A549 (cell line): ENCODE measurements at regions of chr10 and their contacts with region 1.

Region 1: DNA sequence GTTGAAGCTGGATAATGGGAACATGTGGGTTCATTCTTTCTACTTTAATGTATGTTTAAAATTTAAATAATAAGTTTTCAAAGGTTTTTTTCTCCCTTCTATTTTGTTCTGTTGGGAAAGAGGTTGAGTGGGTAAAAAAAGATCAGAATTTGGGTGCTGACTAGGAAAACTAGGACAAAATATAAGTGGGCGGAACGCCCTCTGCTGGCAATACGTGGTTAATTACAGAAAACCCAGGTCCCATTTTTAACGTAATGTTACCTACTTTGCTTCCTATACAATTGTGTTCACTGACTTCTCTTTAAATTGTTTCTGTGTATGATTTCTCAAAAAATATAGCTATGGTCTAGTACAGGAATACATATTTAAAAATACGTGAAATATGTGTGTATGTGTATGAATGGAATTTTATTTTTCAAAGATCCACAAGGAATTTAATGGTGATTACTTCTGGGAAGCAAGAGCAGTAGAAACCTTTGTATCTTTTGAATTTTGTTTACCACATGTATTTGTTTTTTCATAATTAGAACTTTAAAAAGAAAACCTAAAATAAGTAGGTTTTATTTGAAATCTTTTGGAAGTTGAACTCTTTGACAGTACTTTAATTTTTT is 8.7 kb downstream of the ECD start:
- DNase-seq: peak; percentile 34 to 49
- ATAC-seq: peak; percentile 24 to 64; a peak in 3 of 6 replicates
- H3K4me3 ChIP-seq: no peak overlapping the region
- H3K27ac ChIP-seq: no peak overlapping the region
- H3K4me1 ChIP-seq: no peaks in the 10 kb centered on the region
- CTCF ChIP-seq: peak; percentile 95
- EP300 ChIP-seq: no peak
- POLR2A ChIP-seq: no peak
- RAD21 ChIP-seq: peak; percentile 64 to 79

Region 2: GRCh38 chr10:73096449-73097304 is 62.5 kb before region 1 on chr10 and contains the start of gene P4HA1:
- CTCF ChIA-PET with region 1: interaction called, 49 read pairs
- POLR2A ChIA-PET with region 1: interaction called, 4 read pairs
- DNase-seq: peak; percentile 94 to 98
- ATAC-seq: peak; percentile 90 to 96
- H3K4me3 ChIP-seq: peak within 1 kb of the TSS; percentile 75
- H3K27ac ChIP-seq: peak within 1 kb of the TSS; percentile 90 to 94
- H3K4me1 ChIP-seq: peaks cover 18% of the 10 kb centered on the region
- CTCF ChIP-seq: peak; percentile 74
- EP300 ChIP-seq: 0 out of 5 replicates have a peak, but pooled peaks of 1 of the 2 experiments have one; percentile 12
- POLR2A ChIP-seq: peak; percentile 99
- RAD21 ChIP-seq: peak; percentile 67 to 81
- polyA plus RNA-seq, gene P4HA1: 46.1 and 49.0 TPM in 2 replicates

Region 3: DNA sequence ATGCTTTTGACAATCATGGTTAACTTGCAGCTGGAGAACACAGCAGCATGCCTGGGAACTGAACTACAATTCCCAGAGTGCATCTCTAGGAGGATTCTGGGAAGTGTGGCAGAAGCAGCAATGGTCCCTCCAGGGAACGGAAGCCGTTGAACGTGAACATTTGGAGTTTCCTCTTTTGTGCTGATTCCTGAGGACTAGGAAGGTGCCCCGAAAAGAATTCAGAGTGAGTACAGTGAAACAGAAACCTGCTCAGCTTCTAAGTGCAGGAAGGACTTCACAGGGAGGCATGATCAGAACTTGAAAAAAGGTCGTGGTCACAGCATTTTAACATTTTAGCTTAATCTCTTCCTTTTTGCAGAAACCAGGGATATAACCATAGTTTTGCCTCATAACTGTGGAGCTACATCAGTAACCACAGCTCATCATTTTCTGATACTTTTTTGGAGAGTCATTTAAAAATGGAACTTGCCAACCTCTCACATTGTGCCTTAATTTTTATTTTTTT is 48.7 kb before region 1 on chr10 and contains the start of gene NUDT13:
- CTCF ChIA-PET with region 1: interaction called, 13 read pairs
- POLR2A ChIA-PET with region 1: no interaction called
- DNase-seq: peak; percentile 77 to 84
- ATAC-seq: peak; percentile 98 to 100
- H3K4me3 ChIP-seq: peak within 1 kb of the TSS; percentile 65
- H3K27ac ChIP-seq: peak within 1 kb of the TSS; percentile 87 to 89
- H3K4me1 ChIP-seq: peaks cover 18% of the 10 kb centered on the region; the same call in 2 of the 3 replicates
- CTCF ChIP-seq: no peak
- EP300 ChIP-seq: no peak
- POLR2A ChIP-seq: no peak
- RAD21 ChIP-seq: no peak
- polyA plus RNA-seq, gene NUDT13: 4.9 TPM in 2 replicates

Region 4: DNA sequence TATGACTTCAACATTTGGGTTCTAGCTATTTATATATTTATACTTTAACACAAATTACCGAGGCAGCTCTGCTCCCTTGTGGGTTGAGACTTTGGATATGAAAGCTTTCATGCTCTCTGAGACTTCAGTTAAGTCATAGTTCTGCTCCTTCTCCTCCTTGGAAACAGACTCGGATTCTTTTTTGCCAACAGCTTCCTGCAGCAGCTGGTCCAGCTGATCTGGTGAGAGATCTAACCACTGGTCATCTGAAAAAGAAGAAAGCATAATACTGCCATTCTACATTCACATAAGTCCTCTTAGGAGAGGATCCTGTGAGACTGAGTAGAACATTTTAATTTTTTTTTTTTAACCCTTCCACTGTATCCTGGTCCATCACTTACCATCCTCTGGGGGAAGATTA is 19.9 kb before region 1 on chr10:
- CTCF ChIA-PET with region 1: interaction called, 15 read pairs
- POLR2A ChIA-PET with region 1: no interaction called
- DNase-seq: no peak
- ATAC-seq: no peak
- H3K4me3 ChIP-seq: no peak overlapping the region
- H3K27ac ChIP-seq: no peak overlapping the region
- H3K4me1 ChIP-seq: peaks cover 12% of the 10 kb centered on the region
- CTCF ChIP-seq: no peak
- EP300 ChIP-seq: no peak
- POLR2A ChIP-seq: no peak
- RAD21 ChIP-seq: no peak